ENCODE measurements at regions of chr20 and their contacts with region 1.

Region 1: GRCh38 chr20:1466211-1467081 is at the start of gene NSFL1C:
- DNase-seq: peak; percentile 90 to 99 (median 95)

Region 2: DNA sequence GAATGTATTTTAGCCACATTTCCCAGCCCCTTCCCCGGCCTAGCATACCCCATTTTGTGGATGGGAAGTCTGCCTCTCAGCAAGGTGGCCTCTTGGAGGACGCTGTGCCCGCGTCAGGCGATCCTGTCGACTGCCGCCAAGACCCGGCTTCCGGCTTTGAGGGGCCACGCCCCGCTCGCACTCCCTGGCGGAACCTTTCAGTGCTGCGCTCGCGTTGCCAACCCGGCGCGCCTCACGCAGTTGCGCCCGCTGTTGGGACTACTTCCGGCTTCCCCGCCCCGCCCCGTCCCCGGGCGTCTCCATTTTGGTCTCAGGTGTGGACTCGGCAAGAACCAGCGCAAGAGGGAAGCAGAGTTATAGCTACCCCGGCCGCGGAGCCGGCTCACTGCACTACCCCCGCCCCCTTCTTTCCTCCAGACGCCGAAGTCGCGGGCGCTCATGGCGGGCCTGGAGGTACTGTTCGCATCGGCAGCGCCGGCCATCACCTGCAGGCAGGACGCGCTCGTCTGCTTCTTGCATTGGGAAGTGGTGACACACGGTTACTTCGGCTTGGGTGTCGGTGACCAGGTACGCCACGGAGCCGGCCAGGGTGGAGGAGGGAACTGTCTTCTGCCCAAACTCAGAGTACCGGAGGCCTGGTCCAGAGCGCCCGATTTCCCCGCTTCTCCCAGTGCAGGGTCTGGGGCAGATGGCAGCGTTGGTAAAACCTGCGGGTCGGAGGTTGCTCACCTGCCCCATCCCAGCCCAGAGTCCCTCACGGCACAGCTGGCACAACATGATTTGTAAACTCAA is 347.9 kb before region 1 on chr20 and contains the start of gene PSMF1:
- intact Hi-C with region 1: loop called (anchors 5 kb)
- DNase-seq: peak; percentile 88 to 99 (median 92)

Region 3: DNA sequence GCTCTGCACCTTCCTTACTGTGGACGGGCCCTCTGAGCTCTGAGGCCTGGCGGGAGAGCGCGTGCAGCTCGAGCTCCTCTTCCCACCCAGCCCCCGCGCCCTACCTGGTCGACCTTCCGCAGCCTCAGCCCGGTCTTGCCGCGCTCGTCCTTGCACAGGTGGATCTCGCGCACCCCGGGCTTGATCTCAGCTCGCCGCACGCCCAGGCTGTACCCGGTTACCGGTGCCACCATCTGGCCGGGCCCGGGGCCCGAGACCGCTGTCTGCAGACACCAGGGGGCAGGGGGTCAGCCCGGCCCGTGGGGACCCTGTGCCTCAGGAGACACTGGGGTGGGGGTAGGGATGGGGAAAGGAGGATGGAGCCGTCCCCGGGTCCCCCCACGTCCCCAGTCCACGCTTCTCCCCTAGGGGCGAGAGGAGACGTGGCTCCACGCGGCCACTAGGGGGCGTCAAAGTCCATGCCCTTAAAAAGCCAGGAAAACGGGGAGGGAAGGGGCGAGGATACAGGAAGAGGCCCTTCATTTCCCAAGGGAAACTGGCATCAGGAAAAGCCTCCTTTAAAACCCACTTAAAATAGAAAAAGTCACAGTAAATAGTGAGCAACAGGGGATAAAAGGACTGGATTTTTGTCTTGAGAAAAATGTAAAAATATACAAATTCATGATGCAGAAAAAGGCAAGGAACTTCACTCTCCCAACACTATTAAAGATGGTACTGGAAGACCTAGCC is 153.0 kb before region 1 on chr20:
- intact Hi-C with region 1: loop called (anchors 2 kb)
- DNase-seq: peak; percentile 60 to 96 (median 82)

Measured in posterior cingulate gyrus (tissue), 11 donors.